ENCODE measurements at regions of chr21 and their contacts with region 1.

Region 1: DNA sequence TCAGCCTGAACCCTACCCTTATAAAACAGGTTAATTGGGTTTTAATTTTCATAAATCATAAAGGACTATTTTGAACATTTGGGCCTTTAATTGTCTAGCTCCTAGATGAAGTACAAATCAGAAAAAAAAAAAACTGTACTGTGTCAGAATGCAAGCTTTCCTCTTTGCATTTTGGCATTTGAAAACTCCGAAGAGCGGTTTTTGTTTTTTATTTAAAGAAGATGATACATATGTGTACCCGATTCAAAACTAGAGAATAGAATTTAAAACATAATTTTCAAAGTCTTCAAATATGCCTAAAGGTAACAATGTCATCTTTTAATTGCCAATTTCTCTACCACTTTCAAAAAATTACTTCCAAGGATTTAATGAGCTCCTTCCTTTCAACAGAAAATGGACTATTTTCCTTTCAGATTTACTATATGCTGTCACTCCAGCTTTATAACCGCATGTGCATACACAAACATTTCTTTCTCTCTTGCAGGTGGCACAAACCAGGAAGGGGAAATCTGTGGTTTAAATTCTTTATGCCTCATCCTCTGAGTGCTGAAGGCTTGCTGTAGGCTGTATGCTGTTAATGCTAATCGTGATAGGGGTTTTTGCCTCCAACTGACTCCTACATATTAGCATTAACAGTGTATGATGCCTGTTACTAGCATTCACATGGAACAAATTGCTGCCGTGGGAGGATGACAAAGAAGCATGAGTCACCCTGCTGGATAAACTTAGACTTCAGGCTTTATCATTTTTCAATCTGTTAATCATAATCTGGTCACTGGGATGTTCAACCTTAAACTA is 33.7 kb downstream of the MRPL39 start:
- DNase-seq: peak in 8 of 9 donors; percentile 42 to 63 (median 52)
- ATAC-seq: peak; percentile 81
- H3K4me3 ChIP-seq: peak overlapping the region; percentile 33
- H3K4me3 Mint-ChIP-seq: peak overlapping the region; percentile 72 to 92 (median 80)
- H3K27ac ChIP-seq: peak overlapping the region; percentile 42
- H3K27ac Mint-ChIP-seq: peak overlapping the region; percentile 80 to 94 (median 90)
- H3K4me1 ChIP-seq: peaks cover 4 to 15% of the 10 kb centered on the region in 2 donors
- H3K4me1 Mint-ChIP-seq: peaks cover 12 to 72% (median 37%) of the 10 kb centered on the region in 7 donors
- H3K27me3 ChIP-seq: no peaks in the 10 kb centered on the region
- H3K27me3 Mint-ChIP-seq: no peaks in the 10 kb centered on the region

Region 2: DNA sequence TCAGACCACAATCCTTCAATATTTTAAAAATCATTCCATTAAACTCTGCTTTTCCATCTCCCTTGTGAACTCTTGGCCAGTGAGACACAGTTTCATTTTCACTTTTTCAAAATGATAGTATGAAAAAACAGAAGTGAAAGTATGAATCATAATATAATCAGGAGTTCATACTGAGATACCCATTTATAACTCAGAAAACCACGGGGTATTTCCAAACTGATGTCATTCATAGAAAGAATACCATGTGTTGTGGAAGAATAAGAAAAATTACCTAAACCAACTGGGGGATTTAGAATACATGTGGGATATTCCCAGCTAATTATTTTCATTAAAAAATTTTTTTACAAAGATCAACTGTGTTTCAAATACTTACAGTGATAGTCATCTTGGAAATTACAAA is 116.2 kb before region 1 on chr21:
- CTCF ChIA-PET with region 1: no interaction called
- POLR2A ChIA-PET with region 1: no interaction called
- intact Hi-C with region 1: loop called in 1 of 2 experiments (anchors 1 kb)
- DNase-seq: peak in 6 of 9 donors; percentile 11 to 49 (median 34)
- ATAC-seq: peak; percentile 95
- H3K4me3 ChIP-seq: peak overlapping the region; percentile 1
- H3K4me3 Mint-ChIP-seq: peak overlapping the region; percentile 65 to 91 (median 82)
- H3K27ac ChIP-seq: peak overlapping the region; percentile 40
- H3K27ac Mint-ChIP-seq: peak overlapping the region; percentile 81 to 91 (median 86)
- H3K4me1 ChIP-seq: peaks cover 0 to 5% of the 10 kb centered on the region in 2 donors
- H3K4me1 Mint-ChIP-seq: peaks cover 5 to 39% (median 24%) of the 10 kb centered on the region in 7 donors
- H3K27me3 ChIP-seq: no peaks in the 10 kb centered on the region
- H3K27me3 Mint-ChIP-seq: no peaks in the 10 kb centered on the region

Region 3: DNA sequence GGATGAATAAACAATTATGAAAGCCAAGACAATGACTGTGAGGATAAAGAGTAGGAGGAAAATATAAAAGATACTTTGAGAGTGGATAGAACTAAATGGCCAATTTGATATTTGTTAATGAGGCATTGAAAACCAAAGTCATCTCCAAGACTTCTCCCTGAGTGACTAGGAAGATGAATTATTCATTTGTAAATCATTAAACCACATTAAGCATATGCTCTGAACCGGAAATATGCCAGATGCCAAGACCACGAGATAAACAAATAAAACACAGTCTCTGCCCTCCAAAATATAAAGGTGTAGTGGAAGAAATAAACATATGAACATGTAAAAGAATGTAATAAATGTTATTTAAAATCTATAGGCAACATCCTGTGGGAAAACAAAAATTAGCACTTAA is 45.1 kb before region 1 on chr21:
- CTCF ChIA-PET with region 1: no interaction called
- POLR2A ChIA-PET with region 1: no interaction called
- intact Hi-C with region 1: loop called in 1 of 2 experiments (anchors 5 kb)
- DNase-seq: no peak
- ATAC-seq: no peak
- H3K4me3 ChIP-seq: no peak overlapping the region
- H3K4me3 Mint-ChIP-seq: no peak overlapping the region
- H3K27ac ChIP-seq: no peak overlapping the region
- H3K27ac Mint-ChIP-seq: no peak overlapping the region
- H3K4me1 ChIP-seq: no peaks in the 10 kb centered on the region
- H3K4me1 Mint-ChIP-seq: no peaks in the 10 kb centered on the region
- H3K27me3 ChIP-seq: no peaks in the 10 kb centered on the region
- H3K27me3 Mint-ChIP-seq: peaks cover 0 to 7% (median 0%) of the 10 kb centered on the region in 5 donors

Region 4: DNA sequence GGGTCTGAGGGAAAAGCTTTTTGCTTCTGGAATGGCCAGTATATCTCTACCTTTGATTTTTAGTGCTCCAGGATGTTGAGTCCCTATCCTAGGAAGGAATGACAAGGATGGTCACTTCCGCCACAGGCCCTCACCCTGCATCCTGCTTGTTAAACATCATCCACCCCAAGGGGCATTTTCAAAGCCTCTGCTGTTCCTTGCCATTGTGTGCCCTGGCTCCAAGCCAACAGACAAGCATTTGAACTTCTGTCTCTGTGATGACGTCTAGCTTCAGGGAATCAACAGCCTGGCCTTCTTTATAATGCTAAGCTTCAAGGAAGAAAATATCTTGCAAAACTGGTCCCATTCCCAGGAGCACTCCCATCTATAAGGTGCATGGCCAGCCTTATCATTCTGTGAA is 53.1 kb after region 1 on chr21:
- CTCF ChIA-PET with region 1: no interaction called
- POLR2A ChIA-PET with region 1: no interaction called
- intact Hi-C with region 1: no loop called
- DNase-seq: no peak
- ATAC-seq: no peak
- H3K4me3 ChIP-seq: no peak overlapping the region
- H3K4me3 Mint-ChIP-seq: no peak overlapping the region
- H3K27ac ChIP-seq: no peak overlapping the region
- H3K27ac Mint-ChIP-seq: no peak overlapping the region
- H3K4me1 ChIP-seq: no peaks in the 10 kb centered on the region
- H3K4me1 Mint-ChIP-seq: no peaks in the 10 kb centered on the region
- H3K27me3 ChIP-seq: no peaks in the 10 kb centered on the region
- H3K27me3 Mint-ChIP-seq: peaks cover 0 to 12% (median 0%) of the 10 kb centered on the region in 5 donors

Region 5: DNA sequence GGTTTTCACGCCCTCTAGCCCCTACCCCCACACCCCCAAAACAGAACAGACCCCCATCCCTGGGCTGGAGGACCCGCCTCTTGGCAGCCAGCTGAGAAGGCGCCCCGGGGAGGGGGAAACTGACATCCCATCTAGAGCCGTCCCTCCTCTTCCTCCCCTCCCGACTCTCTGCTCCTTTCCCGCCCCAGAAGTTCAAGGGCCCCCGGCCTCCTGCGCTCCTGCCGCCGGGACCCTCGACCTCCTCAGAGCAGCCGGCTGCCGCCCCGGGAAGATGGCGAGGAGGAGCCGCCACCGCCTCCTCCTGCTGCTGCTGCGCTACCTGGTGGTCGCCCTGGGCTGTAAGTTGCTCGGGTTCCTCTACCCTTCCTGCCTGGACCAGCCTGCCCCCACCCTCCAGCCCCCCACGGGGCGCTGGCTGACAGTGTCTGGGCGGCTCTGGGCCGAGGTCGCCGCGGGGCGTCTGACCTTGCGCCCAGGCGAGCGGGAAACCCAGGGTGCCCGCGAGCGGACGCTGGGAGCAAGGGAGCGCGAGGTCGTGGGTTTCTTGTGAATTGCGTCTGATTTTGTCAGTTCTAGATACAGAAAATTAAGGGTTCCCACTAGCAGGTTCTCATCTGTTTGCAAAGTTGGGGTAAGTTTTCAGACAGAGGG is 66.1 kb after region 1 on chr21:
- CTCF ChIA-PET with region 1: no interaction called
- POLR2A ChIA-PET with region 1: no interaction called
- intact Hi-C with region 1: loop called in 1 of 2 experiments (anchors 2 kb)
- DNase-seq: peak; percentile 19 to 54 (median 38)
- ATAC-seq: peak; percentile 89
- H3K4me3 ChIP-seq: peak overlapping the region; percentile 68
- H3K4me3 Mint-ChIP-seq: peak overlapping the region; percentile 74 to 88 (median 82)
- H3K27ac ChIP-seq: peak overlapping the region; percentile 9
- H3K27ac Mint-ChIP-seq: no peak overlapping the region
- H3K4me1 ChIP-seq: peaks cover 0 to 10% of the 10 kb centered on the region in 2 donors
- H3K4me1 Mint-ChIP-seq: peaks cover 14 to 22% (median 17%) of the 10 kb centered on the region in 7 donors
- H3K27me3 ChIP-seq: no peaks in the 10 kb centered on the region
- H3K27me3 Mint-ChIP-seq: peaks cover 20 to 47% (median 38%) of the 10 kb centered on the region in 5 donors

Measured in naive thymus-derived CD4-positive, alpha-beta T cell (primary cell).